Mammary epithelial cell (primary cell): ENCODE measurements at regions of chr11 and their contacts with region 1.

Region 1: GRCh38 chr11:65251476-65251875 is 10.3 kb upstream of the POLA2 start:
- DNase-seq: no peak
- H3K4me3 ChIP-seq: no peak overlapping the region
- H3K27ac ChIP-seq: no peak overlapping the region
- H3K4me1 ChIP-seq: no peaks in the 10 kb centered on the region
- H3K27me3 ChIP-seq: no peaks in the 10 kb centered on the region
- CTCF ChIP-seq: no peak

Region 2: GRCh38 chr11:64787526-64788320 is 463.8 kb before region 1 on chr11:
- CTCF ChIA-PET with region 1: no interaction called
- dilution Hi-C with region 1: no loop called
- in situ Hi-C with region 1: no loop called
- intact Hi-C with region 1: loop called (anchors 10 kb)
- DNase-seq: peak; percentile 25
- H3K4me3 ChIP-seq: no peak overlapping the region
- H3K27ac ChIP-seq: no peak overlapping the region
- H3K4me1 ChIP-seq: no peaks in the 10 kb centered on the region
- H3K27me3 ChIP-seq: no peaks in the 10 kb centered on the region
- CTCF ChIP-seq: peak; percentile 81 to 92

Region 3: GRCh38 chr11:65117216-65118096 is 134.0 kb before region 1 on chr11 and contains the start of gene ZNHIT2:
- CTCF ChIA-PET with region 1: no interaction called
- dilution Hi-C with region 1: loop called (anchors 10 kb)
- in situ Hi-C with region 1: no loop called
- intact Hi-C with region 1: no loop called
- DNase-seq: peak; percentile 98
- H3K4me3 ChIP-seq: peak within 1 kb of the TSS; percentile 74 to 82 (median 81)
- H3K27ac ChIP-seq: peak within 1 kb of the TSS; percentile 74
- H3K4me1 ChIP-seq: peaks cover 33% of the 10 kb centered on the region
- H3K27me3 ChIP-seq: no peaks in the 10 kb centered on the region
- CTCF ChIP-seq: peak; percentile 84 to 95
- total RNA-seq, gene ZNHIT2: 13.6 to 15.2 TPM

Region 4: GRCh38 chr11:65213322-65214211 is 37.9 kb before region 1 on chr11:
- CTCF ChIA-PET with region 1: no interaction called
- dilution Hi-C with region 1: loop called (anchors 5 kb)
- in situ Hi-C with region 1: no loop called
- intact Hi-C with region 1: no loop called
- DNase-seq: no peak
- H3K4me3 ChIP-seq: no peak overlapping the region
- H3K27ac ChIP-seq: no peak overlapping the region
- H3K4me1 ChIP-seq: no peaks in the 10 kb centered on the region
- H3K27me3 ChIP-seq: no peaks in the 10 kb centered on the region
- CTCF ChIP-seq: no peak

Region 5: DNA sequence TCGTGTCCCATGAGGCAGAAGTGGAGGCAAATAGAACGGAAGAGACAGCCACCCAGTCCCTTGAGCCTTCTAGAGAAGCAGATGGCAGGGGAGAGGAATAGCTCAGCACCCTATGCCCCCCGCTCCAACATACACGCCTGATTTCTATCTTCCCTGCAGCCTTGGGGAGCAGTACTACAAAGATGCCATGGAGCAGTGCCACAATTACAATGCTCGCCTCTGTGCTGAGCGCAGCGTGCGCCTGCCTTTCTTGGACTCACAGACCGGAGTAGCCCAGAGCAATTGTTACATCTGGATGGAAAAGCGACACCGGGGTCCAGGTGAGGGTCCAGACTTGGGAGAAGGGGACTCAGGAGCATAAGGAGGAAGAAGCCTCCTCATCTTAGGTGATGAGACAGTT is 88.8 kb after region 1 on chr11:
- CTCF ChIA-PET with region 1: no interaction called
- dilution Hi-C with region 1: loop called (anchors 5 kb)
- in situ Hi-C with region 1: no loop called
- intact Hi-C with region 1: no loop called
- DNase-seq: no peak
- H3K4me3 ChIP-seq: no peak overlapping the region
- H3K27ac ChIP-seq: no peak overlapping the region
- H3K4me1 ChIP-seq: peaks cover 4% of the 10 kb centered on the region
- H3K27me3 ChIP-seq: no peaks in the 10 kb centered on the region
- CTCF ChIP-seq: no peak